Vagina (tissue), 2 donors: ENCODE measurements at regions of chr5 and their contacts with region 1.

Region 1: GRCh38 chr5:179623003-179623880 is at the start of gene HNRNPH1:
- DNase-seq: peak; percentile 99 to 100
- H3K4me3 ChIP-seq: peak within 1 kb of the TSS; percentile 75 to 92
- H3K27ac ChIP-seq: peak within 1 kb of the TSS; percentile 99
- H3K4me1 ChIP-seq: peaks cover 52% of the 10 kb centered on the region
- H3K27me3 ChIP-seq: no peaks in the 10 kb centered on the region
- CTCF ChIP-seq: peak in 1 of 3 experiments; percentile 9
- POLR2A ChIP-seq: peak; percentile 76 to 100
- total RNA-seq, gene HNRNPH1: 483 TPM

Region 2: DNA sequence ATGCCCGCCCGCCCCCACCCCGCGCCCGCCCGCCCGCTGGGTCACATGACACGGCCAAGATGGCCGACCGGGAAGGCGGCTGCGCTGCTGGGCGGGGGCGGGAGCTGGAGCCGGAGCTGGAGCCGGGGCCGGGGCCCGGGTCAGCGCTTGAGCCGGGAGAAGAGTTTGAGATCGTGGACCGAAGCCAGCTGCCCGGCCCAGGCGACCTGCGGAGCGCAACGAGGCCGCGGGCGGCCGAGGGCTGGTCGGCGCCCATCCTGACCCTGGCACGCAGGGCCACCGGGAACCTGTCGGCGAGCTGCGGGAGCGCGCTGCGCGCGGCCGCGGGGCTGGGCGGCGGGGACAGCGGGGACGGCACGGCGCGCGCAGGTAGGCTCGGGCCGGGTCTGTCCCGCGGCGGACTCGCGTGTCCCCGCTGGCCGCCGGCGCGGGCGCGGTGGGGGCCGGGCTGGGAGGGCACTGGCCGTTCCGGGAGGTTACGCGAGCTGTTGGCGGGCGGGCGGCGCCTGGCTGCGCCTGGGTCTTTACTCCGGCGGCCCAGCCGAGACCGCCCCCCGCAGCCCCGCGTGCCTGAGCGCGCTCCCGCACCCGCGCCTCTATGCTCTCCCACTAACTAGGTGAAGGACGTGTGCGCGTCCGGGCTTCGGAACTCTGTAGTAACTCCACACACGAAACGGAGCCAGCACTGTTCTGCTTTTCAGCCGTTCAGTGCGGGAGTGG is 72.6 kb before region 1 on chr5 and contains the start of gene RUFY1:
- intact Hi-C with region 1: loop called (anchors 5 kb)
- DNase-seq: no peak
- H3K4me3 ChIP-seq: peak within 1 kb of the TSS; percentile 89 to 98
- H3K27ac ChIP-seq: peak within 1 kb of the TSS; percentile 95
- H3K4me1 ChIP-seq: peaks cover 37% of the 10 kb centered on the region
- H3K27me3 ChIP-seq: no peaks in the 10 kb centered on the region
- CTCF ChIP-seq: no peak
- POLR2A ChIP-seq: peak in 1 of 2 donors; percentile 61
- total RNA-seq, gene RUFY1: 35.6 TPM